GM18951 (cell line): ENCODE measurements at regions of chr6 and their contacts with region 1.

Region 1: GRCh38 chr6:1609648-1610496 is at the start of gene FOXC1:
- POLR2A ChIP-seq: no peak

Region 2: DNA sequence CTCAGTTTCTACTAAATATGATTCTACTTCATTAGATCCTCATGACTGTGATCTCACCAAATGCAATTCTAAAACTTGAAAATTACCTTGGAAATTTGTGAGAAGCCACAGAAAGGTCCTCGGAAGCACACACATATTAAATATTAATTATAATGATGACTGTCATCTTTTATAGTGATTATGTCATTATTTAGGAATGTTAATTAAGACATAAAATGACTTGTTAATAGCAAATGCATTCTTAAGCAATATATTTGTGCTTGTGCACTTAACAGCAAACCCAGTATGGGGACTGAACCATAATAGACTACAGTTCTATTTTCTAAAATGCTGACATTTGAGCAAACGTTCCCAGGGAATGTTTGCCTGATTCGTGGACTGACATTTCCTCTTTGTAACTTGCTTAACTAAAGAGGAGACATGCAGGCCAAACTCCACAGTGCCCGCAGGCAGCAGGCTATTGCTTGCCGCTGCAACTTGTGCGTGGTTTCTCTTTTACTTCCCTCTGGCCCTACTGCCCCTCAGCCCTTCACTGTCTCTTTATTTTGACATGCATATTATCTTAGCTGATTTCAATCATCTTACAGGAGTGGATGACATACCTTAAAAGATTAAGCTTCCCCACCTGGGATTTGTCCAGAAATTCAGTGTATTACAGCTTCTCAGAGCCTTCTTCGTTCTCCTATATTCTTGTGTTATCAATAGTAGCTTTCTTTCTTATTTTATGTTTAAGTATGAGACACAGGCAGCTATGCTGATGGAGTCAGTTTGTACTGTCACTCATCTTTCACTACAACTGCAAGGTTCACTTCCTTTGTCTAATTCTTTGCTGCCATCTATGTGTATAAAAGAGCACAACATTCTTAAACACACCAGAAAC is 494.0 kb after region 1 on chr6:
- in situ Hi-C with region 1: loop called (anchors 10 kb)
- POLR2A ChIP-seq: no peak

Region 3: GRCh38 chr6:2196079-2196679 is 586.3 kb after region 1 on chr6:
- in situ Hi-C with region 1: loop called (anchors 25 kb)
- POLR2A ChIP-seq: no peak